ENCODE measurements at regions of chr2 and their contacts with region 1.

Region 1: DNA sequence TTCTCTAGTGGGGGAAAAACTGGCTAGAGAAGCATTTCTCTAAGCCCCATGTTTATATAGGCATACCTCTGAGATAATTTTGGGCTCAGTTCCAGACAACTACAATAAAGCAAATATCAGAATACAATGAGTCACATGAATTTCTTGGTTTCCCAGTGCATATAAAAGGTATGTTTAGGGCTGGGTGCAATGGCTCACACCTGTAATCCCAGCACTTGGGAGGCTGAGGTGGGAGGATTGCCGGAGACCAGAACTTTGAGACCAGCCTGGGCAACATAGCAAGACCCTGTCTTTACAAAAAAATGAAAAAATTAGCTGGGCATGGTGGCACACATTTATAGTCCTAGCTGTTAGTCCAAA is 22.2 kb downstream of the TSN start:
- DNase-seq: peak in 1 of 2 experiments; percentile 18
- H3K4me3 ChIP-seq: peak overlapping the region; percentile 37
- H3K4me3 Mint-ChIP-seq: peak overlapping the region; percentile 71
- H3K27ac Mint-ChIP-seq: peak overlapping the region; percentile 93
- H3K4me1 ChIP-seq: peaks cover 38% of the 10 kb centered on the region
- H3K4me1 Mint-ChIP-seq: peaks cover 25% of the 10 kb centered on the region
- H3K27me3 ChIP-seq: no peaks in the 10 kb centered on the region
- H3K27me3 Mint-ChIP-seq: no peaks in the 10 kb centered on the region
- CTCF ChIP-seq: no peak

Region 2: GRCh38 chr2:121418494-121419058 is 359.1 kb before region 1 on chr2:
- CTCF ChIA-PET with region 1: no interaction called
- POLR2A ChIA-PET with region 1: no interaction called
- intact Hi-C with region 1: no loop called
- DNase-seq: no peak
- H3K4me3 ChIP-seq: no peak overlapping the region
- H3K4me3 Mint-ChIP-seq: no peak overlapping the region
- H3K27ac Mint-ChIP-seq: no peak overlapping the region
- H3K4me1 ChIP-seq: no peaks in the 10 kb centered on the region
- H3K4me1 Mint-ChIP-seq: no peaks in the 10 kb centered on the region
- H3K27me3 ChIP-seq: no peaks in the 10 kb centered on the region
- H3K27me3 Mint-ChIP-seq: no peaks in the 10 kb centered on the region
- CTCF ChIP-seq: no peak

Region 3: DNA sequence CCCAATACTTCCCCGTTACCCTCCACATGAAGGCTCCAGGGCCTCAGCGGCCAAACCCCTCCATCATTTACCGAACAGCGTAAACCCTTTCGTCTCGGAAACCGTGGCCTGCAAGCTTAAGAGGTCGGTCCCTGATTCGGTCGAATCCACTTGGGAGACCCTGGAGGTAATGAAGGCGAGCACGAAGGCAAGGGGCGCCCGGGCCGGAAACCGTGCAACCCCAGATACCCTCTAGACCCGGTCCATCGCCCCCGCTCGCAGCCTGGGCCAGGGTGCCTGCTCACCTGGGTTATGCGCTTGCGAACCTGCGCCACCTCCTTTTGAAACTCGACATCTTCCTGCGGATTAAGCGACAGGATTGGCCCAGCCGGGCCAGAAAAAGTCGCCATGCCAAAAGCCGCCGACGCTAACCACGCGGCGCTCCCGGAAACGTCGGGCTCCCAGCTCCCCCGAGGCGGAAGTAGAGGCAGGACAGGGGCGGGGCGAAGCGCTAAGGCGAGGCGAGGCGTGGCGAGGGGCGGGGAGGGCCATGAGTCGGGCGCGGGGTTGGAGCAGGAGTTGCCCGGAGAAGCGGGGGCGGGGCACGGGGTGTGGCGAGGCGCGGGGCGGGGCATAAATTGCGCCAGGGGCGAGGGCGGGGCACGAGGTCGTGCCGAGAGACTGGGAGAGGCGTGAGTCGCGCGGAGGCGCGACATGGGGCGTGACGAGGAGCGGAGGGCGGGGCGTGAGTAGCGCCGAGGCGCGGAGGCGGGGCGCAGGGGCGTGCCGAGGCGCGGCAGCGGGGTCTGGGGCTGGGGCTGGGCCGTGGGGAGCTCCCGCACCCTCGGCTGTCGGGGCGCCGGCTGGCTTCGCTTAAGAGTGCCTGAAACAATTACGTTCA is 41.0 kb before region 1 on chr2 and contains the start of gene NIFK:
- CTCF ChIA-PET with region 1: interaction called, 10 read pairs
- POLR2A ChIA-PET with region 1: interaction called, 22 read pairs
- intact Hi-C with region 1: loop called (anchors 5 kb)
- DNase-seq: peak; percentile 99 to 100
- H3K4me3 ChIP-seq: peak within 1 kb of the TSS; percentile 82
- H3K4me3 Mint-ChIP-seq: peak within 1 kb of the TSS; percentile 98
- H3K27ac Mint-ChIP-seq: peak within 1 kb of the TSS; percentile 96
- H3K4me1 ChIP-seq: peaks cover 14% of the 10 kb centered on the region
- H3K4me1 Mint-ChIP-seq: peaks cover 15% of the 10 kb centered on the region
- H3K27me3 ChIP-seq: no peaks in the 10 kb centered on the region
- H3K27me3 Mint-ChIP-seq: no peaks in the 10 kb centered on the region
- CTCF ChIP-seq: no peak
- total RNA-seq, gene NIFK: 84.7 and 104 TPM in 2 replicates

Region 4: DNA sequence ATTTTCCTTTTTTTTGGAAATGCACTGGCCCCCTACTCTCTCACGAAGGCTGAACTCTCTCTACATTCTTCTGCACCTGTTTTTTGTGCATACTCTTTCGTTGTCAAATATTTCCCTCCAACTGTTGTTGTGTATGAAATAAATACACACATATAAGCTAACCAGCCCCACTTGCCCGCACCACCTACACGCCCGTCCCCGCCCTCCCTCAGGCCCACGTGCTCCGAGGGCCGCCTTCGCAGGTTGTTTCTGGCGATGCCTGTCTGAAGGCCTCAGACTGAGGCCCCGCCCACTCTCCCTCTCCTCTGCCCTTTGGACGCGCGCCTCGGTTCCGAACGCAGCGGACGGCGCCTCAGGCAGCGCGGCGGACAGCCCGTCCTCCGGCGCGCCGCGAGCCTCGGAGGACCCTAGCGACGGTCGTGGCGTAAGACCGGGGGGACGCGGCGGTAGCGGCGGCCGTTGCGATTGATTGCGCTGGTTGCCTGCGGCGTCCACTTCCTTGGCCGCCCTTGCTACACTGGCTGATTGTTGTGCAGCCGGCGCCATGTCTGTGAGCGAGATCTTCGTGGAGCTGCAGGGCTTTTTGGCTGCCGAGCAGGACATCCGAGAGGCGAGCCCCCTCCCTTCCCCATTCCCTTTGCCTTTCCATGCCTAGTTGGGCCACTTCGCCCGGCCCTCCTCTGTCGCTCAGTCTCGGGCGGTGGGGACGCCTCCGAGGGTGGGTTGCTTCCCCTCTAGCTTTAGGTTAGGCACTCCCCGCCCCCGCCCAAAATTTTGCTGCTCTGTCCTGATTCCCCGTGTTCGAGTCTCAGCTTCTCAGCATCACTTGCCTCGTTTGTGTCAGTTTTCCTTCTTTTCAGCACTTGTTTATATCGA is 22.2 kb before region 1 on chr2 and contains the start of gene TSN:
- CTCF ChIA-PET with region 1: interaction called, 5 read pairs
- POLR2A ChIA-PET with region 1: interaction called, 17 read pairs
- intact Hi-C with region 1: loop called (anchors 1 kb)
- DNase-seq: peak; percentile 98
- H3K4me3 ChIP-seq: peak within 1 kb of the TSS; percentile 90
- H3K4me3 Mint-ChIP-seq: peak within 1 kb of the TSS; percentile 77
- H3K27ac Mint-ChIP-seq: peak within 1 kb of the TSS; percentile 82
- H3K4me1 ChIP-seq: peaks cover 7% of the 10 kb centered on the region; the same call in 1 of the 2 replicates
- H3K4me1 Mint-ChIP-seq: peaks cover 5% of the 10 kb centered on the region
- H3K27me3 ChIP-seq: no peaks in the 10 kb centered on the region
- H3K27me3 Mint-ChIP-seq: no peaks in the 10 kb centered on the region
- CTCF ChIP-seq: no peak
- total RNA-seq, gene TSN: 125 and 136 TPM in 2 replicates

Region 5: GRCh38 chr2:121790250-121790956 is 12.7 kb after region 1 on chr2:
- CTCF ChIA-PET with region 1: interaction called, 3 read pairs
- POLR2A ChIA-PET with region 1: interaction called, 10 read pairs
- intact Hi-C with region 1: loop called (anchors 1 kb)
- DNase-seq: peak; percentile 67 to 71
- H3K4me3 ChIP-seq: no peak overlapping the region
- H3K4me3 Mint-ChIP-seq: peak overlapping the region; percentile 30
- H3K27ac Mint-ChIP-seq: peak overlapping the region; percentile 92
- H3K4me1 ChIP-seq: peaks cover 22% of the 10 kb centered on the region
- H3K4me1 Mint-ChIP-seq: peaks cover 30% of the 10 kb centered on the region
- H3K27me3 ChIP-seq: no peaks in the 10 kb centered on the region
- H3K27me3 Mint-ChIP-seq: no peaks in the 10 kb centered on the region
- CTCF ChIP-seq: no peak

Region 6: GRCh38 chr2:121810959-121811853 is 33.5 kb after region 1 on chr2:
- CTCF ChIA-PET with region 1: interaction called, 8 read pairs
- POLR2A ChIA-PET with region 1: interaction called, 5 read pairs
- intact Hi-C with region 1: loop called (anchors 1 kb)
- DNase-seq: peak; percentile 66 to 70
- H3K4me3 ChIP-seq: no peak overlapping the region
- H3K4me3 Mint-ChIP-seq: no peak overlapping the region
- H3K27ac Mint-ChIP-seq: no peak overlapping the region
- H3K4me1 ChIP-seq: no peaks in the 10 kb centered on the region
- H3K4me1 Mint-ChIP-seq: peaks cover 9% of the 10 kb centered on the region
- H3K27me3 ChIP-seq: no peaks in the 10 kb centered on the region
- H3K27me3 Mint-ChIP-seq: no peaks in the 10 kb centered on the region
- CTCF ChIP-seq: peak; percentile 60 to 65

Region 7: DNA sequence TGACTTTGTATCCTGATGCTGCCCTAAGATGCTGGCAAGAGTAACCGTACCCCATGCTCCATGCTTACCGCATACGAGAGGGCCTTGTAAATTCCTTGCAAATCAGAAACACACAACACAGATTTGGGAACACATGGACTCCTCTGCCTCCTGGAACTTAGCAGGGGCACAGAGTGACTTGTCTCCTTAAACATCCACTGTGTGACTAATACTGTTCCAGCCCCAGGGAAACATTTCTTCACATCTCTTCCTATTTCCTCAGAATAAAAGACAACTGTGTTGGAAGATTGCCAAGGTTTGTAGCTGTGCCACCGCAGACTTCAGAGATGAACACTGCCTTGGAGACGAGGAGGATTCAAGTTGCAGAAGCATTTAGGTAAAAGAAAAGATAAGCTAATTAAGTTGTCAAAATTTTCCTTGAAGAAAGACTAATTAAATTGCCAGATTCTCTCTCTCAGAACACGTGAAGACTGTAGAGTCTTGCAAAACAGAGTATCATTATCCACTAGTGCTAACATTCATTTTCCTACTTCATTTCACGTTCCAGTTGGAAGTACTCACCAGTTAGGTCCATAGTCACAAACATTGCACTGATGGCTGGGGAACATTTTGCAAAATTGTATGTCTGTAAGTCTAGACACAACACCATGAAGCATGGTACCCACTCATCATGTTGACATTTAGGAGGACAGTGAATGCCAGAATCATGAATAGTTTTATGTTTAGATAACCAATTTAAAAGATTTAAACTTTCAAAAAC is 166.6 kb after region 1 on chr2:
- CTCF ChIA-PET with region 1: no interaction called
- POLR2A ChIA-PET with region 1: no interaction called
- intact Hi-C with region 1: no loop called
- DNase-seq: no peak
- H3K4me3 ChIP-seq: no peak overlapping the region
- H3K4me3 Mint-ChIP-seq: no peak overlapping the region
- H3K27ac Mint-ChIP-seq: no peak overlapping the region
- H3K4me1 ChIP-seq: no peaks in the 10 kb centered on the region
- H3K4me1 Mint-ChIP-seq: no peaks in the 10 kb centered on the region
- H3K27me3 ChIP-seq: no peaks in the 10 kb centered on the region; the same call in 1 of the 2 replicates
- H3K27me3 Mint-ChIP-seq: peaks cover 13% of the 10 kb centered on the region
- CTCF ChIP-seq: no peak